ENCODE measurements at regions of chr15 and their contacts with region 1.

Region 1: GRCh38 chr15:22240951-22241350 is 160.6 kb downstream of the OR4M2 start:
- DNase-seq: no peak
- CTCF ChIP-seq: no peak

Region 2: GRCh38 chr15:22253676-22254408 is 12.9 kb after region 1 on chr15:
- CTCF ChIA-PET with region 1: interaction called, 12 read pairs
- POLR2A ChIA-PET with region 1: no interaction called
- DNase-seq: peak; percentile 69
- CTCF ChIP-seq: no peak